ENCODE measurements at regions of chr2 and their contacts with region 1.

Region 1: GRCh38 chr2:39394516-39394961 is 42.5 kb downstream of the MAP4K3 start:
- DNase-seq: no peak
- ATAC-seq: peak in 2 of 4 donors; percentile 41 to 61
- H3K4me3 ChIP-seq: no peak overlapping the region
- H3K27ac ChIP-seq: peak overlapping the region in 11 of 12 donors; percentile 9 to 66 (median 41)
- H3K4me1 ChIP-seq: peaks cover 0 to 63% (median 34%) of the 10 kb centered on the region in 12 donors
- H3K27me3 ChIP-seq: no peaks in the 10 kb centered on the region
- CTCF ChIP-seq: no peak
- POLR2A ChIP-seq: no peak

Region 2: GRCh38 chr2:39431592-39432316 is 37.2 kb after region 1 on chr2:
- intact Hi-C with region 1: loop called in 4 of 10 experiments (anchors 5 to 10 kb)
- DNase-seq: no peak
- ATAC-seq: peak in 2 of 4 donors; percentile 38 to 55
- H3K4me3 ChIP-seq: no peak overlapping the region
- H3K27ac ChIP-seq: peak overlapping the region in 3 of 12 donors; percentile 9 to 25 (median 16)
- H3K4me1 ChIP-seq: peaks cover 3 to 83% (median 59%) of the 10 kb centered on the region in 12 donors
- H3K27me3 ChIP-seq: no peaks in the 10 kb centered on the region
- CTCF ChIP-seq: no peak
- POLR2A ChIP-seq: no peak

Region 3: GRCh38 chr2:39492095-39492590 is 97.6 kb after region 1 on chr2:
- intact Hi-C with region 1: no loop called
- DNase-seq: no peak
- ATAC-seq: peak; percentile 70 to 88 (median 84)
- H3K4me3 ChIP-seq: peak overlapping the region in 1 of 12 donors; percentile 5
- H3K27ac ChIP-seq: peak overlapping the region; percentile 5 to 91 (median 60)
- H3K4me1 ChIP-seq: peaks cover 0 to 65% (median 25%) of the 10 kb centered on the region in 12 donors
- H3K27me3 ChIP-seq: no peaks in the 10 kb centered on the region
- CTCF ChIP-seq: no peak
- POLR2A ChIP-seq: no peak

Measured in heart left ventricle (tissue), 16 donors.